Dorsolateral prefrontal cortex (tissue), 120 donors: ENCODE measurements at regions of chr3 and their contacts with region 1.

Region 1: DNA sequence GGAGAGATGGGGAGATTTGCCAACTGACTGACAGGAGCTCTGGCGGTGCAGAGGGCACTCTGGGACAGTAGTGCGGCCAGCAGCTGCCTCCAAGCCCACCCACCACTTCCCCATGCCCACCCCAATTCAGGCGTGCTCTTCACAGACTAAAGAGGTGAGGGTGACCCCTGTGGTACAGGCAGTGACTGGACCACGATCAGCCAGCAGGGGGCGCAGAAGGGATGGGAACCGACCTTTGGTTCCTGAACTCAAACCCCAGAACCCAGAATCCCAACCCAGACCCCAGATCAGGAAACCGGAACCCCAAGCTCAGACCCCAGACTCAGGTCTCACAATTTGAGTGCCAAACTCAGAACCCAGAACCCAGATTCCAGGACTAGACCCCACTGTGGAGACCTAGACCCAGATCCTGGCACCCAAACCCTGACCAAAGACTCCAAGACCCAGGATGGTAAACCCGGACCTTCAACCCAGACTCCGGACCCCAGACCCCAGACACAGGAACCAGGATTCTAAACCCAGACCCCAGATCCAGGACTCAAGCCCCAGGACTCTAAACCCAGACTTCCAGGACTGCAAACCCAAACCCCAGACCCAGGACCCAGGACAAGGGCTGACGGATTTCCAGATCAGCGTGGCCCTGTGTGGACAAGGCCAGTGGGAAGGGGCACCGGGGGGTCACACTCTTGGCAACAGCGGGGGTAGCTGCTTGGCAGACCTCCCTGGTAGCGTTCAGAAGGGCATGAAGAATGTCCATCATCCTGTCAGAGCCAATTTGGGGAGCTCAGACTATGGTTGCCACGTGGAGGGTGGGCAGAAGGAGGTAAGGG is 3.7 kb upstream of the MYL3 start:
- DNase-seq: peak in 9 of 10 donors; percentile 71 to 86 (median 80)
- H3K4me3 ChIP-seq: no peak overlapping the region
- H3K27ac ChIP-seq: peak overlapping the region in 30 of 59 donors; percentile 6 to 80 (median 56)
- H3K27me3 ChIP-seq: peaks cover 0 to 4% (median 0%) of the 10 kb centered on the region in 45 donors
- CTCF ChIP-seq: peak; percentile 64 to 95 (median 85)

Region 2: GRCh38 chr3:46705022-46705530 is 161.9 kb before region 1 on chr3:
- intact Hi-C with region 1: loop called in 1 of 2 experiments (anchors 10 kb)
- DNase-seq: peak; percentile 57 to 86 (median 80)
- H3K4me3 ChIP-seq: no peak overlapping the region
- H3K27ac ChIP-seq: no peak overlapping the region
- H3K27me3 ChIP-seq: peaks cover 0 to 5% (median 0%) of the 10 kb centered on the region in 45 donors
- CTCF ChIP-seq: peak; percentile 86 to 100 (median 97)

Region 3: DNA sequence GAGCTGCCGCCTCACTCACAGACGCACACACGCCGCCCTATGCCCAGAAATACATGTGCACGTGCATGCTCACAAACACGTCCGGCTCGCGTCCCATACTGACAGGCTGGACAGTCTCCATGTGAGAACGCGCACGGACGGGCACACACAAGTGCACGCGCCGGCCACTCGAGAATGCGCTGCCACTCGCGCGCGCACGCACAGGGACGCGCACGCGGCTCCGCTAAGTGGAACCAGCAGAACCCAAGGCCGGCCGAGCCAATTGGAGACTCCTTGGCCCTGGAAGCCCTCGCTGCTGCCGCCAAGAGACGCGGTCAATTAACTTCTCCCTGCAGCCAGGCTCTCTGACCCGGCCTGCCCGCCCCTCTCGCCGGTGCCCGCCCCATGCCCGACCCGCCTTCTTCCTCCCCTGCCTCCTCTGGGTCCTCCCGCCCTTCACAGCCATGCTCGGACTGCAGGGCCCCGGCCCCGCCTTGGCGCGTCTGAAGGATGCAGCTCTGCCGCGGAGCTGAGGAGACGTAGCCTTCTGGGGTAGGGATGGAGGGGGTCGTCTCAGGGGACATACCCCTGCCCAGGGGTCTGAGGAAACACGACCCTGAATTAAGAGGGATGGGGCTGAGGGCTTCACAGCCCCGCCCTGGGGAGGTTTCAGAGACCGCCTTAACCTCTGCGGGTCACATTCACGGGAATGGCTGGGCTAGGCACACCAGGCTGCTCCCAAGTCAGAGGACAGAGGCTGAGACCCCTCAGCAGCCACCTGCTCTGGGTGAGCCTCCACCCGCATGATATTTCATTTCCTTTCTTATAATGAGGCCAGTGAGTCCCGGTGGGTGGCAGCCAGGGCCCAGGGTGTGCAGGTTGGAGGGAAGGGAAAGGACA is 25.6 kb after region 1 on chr3:
- intact Hi-C with region 1: loop called in 1 of 2 experiments (anchors 1 kb)
- DNase-seq: peak; percentile 56 to 86 (median 78)
- H3K4me3 ChIP-seq: peak overlapping the region; percentile 23 to 73 (median 55)
- H3K27ac ChIP-seq: peak overlapping the region in 33 of 59 donors; percentile 6 to 77 (median 48)
- H3K27me3 ChIP-seq: no peaks in the 10 kb centered on the region
- CTCF ChIP-seq: peak in 12 of 56 donors; percentile 5 to 27 (median 13)

Region 4: GRCh38 chr3:47210863-47211405 is 344.0 kb after region 1 on chr3:
- intact Hi-C with region 1: no loop called
- DNase-seq: no peak
- H3K4me3 ChIP-seq: no peak overlapping the region
- H3K27ac ChIP-seq: no peak overlapping the region
- H3K27me3 ChIP-seq: no peaks in the 10 kb centered on the region
- CTCF ChIP-seq: no peak